Spleen (tissue), 13 donors: ENCODE measurements at regions of chr1 and their contacts with region 1.

Region 1: DNA sequence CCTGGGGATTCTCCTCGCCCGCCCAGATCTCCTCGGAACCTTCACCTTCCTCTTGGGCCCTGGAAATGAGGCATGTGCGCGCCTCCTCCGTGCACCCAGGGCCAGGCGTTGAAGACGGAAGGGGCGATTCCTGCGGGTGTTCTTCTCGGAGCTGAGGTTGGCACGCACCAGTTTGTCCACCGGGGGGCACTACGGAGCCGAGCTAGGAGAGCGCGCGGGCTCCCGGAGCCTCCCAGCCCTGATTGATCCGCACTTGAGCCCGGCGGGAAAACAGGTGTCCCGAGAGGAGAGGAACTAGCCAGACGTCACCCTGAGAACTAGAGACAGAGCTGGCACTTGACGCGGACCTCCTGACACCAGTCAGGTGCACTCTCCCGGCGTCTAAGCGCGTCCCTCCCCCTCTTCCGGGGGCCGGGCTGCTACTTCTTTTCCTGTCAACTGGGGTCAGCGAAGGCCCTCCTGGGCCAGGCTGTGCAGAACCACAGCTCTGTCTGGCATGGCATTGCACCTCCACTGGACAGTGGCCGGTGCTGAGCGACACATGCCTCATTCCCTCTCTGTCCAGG is 18.3 kb upstream of the SERINC2 start:
- DNase-seq: peak; percentile 92
- H3K4me3 ChIP-seq: peak overlapping the region; percentile 34 to 62 (median 41)
- H3K27ac ChIP-seq: peak overlapping the region in 1 of 8 donors; percentile 17
- H3K4me1 ChIP-seq: peaks cover 0 to 31% (median 11%) of the 10 kb centered on the region in 6 donors
- H3K27me3 ChIP-seq: no peaks in the 10 kb centered on the region
- CTCF ChIP-seq: peak; percentile 67 to 93 (median 83)
- POLR2A ChIP-seq: no peak

Region 2: DNA sequence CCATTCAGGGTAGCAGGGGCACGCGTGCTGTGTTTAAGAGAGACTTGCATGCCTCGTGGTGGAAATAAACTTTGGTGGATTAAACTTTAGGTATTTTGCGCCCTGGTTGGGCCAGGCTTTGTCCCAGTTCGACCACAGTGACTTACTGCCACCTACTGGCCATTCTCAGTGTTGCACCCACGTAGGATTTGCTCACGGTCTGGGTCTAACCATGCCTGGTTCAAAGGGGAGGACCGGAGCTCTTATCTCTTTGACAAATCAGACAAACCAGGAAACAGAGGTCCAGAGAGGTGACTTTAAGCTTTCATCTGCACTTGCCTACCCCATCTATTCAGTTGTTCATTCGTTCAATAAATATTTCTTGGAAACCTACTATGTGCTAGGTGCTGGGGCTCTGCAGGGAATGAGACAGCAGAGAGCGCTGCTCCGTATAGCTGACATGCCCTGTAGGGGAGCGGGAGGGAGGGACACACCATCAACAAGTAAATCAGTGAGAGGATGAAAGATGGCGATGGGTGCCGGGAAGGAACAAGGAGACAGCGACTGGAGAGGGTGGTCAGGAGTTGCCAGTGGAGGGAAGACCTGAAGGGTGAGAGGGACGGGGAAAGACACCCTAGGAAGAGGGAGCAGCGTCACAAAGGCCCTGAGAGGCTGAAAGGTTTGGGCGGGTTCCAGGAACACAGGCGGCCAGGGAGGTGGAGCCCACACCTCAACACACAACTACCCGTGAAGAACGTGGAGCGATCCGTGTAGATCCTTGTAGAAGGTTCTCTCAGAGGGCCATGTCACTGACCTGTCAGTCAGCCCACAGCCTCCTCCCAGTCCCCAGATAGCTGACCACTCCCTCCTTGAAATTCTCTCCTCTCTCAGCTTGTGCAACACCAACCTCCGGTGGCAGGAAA is 154.4 kb after region 1 on chr1:
- intact Hi-C with region 1: loop called (anchors 10 kb)
- DNase-seq: peak; percentile 89
- H3K4me3 ChIP-seq: peak overlapping the region in 1 of 8 donors; percentile 47
- H3K27ac ChIP-seq: no peak overlapping the region
- H3K4me1 ChIP-seq: peaks cover 0 to 17% (median 10%) of the 10 kb centered on the region in 6 donors
- H3K27me3 ChIP-seq: peaks cover 0 to 35% (median 0%) of the 10 kb centered on the region in 7 donors
- CTCF ChIP-seq: peak; percentile 91 to 98 (median 96)
- POLR2A ChIP-seq: no peak